ENCODE measurements at regions of chr6 and their contacts with region 1.

Region 1: GRCh38 chr6:30646458-30647241 is at the start of gene C6orf136:
- DNase-seq: peak; percentile 94
- H3K4me3 Mint-ChIP-seq: peak within 1 kb of the TSS; percentile 85
- H3K27ac Mint-ChIP-seq: peak within 1 kb of the TSS; percentile 86
- H3K4me1 Mint-ChIP-seq: peaks cover 22% of the 10 kb centered on the region
- H3K27me3 Mint-ChIP-seq: no peaks in the 10 kb centered on the region
- total RNA-seq, gene C6orf136: 33.6 TPM

Region 2: DNA sequence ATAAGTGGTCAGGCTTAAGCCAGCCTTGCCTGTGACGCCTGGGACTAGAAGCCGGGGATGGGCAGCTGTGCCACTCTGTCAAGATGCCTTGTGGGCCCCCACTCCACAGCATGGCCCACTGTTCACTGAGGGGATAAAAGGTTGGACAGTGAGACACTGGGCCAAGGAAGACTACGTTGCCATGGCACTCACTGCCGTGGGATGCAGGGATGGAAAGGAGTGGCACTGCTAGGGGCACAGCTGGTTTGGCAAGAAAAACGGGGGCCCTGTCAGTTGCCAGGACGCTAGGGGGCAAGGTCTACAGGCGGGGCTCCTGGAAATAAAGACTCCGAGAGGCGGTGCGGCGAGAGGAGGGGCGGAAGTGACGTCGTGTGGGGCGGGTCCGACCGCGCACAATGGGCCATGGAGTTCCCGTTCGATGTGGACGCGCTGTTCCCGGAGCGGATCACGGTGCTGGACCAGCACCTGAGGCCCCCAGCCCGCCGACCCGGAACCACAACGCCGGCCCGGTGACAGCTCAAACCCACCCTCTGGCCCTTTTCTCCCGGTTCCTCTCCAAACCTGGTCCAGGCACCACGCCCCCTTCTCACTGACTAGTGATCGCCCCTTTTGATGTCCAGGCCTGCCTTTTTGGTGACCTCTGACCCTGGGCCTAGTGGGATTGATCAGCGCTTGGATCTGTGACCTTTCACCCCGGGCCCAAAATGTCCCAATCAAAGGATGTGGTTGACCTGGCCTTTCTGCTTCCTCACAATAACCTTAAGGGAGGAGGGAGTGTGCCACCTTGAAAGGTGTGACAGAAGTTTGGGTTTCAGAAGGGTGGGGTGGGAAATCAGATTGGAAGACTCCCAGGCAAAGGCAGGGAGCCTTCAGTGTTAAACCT is 19.9 kb before region 1 on chr6 and contains the start of gene ATAT1:
- CTCF ChIA-PET with region 1: no interaction called
- intact Hi-C with region 1: loop called (anchors 2 kb)
- DNase-seq: peak; percentile 89
- H3K4me3 Mint-ChIP-seq: peak within 1 kb of the TSS; percentile 96
- H3K27ac Mint-ChIP-seq: peak within 1 kb of the TSS; percentile 93
- H3K4me1 Mint-ChIP-seq: peaks cover 21% of the 10 kb centered on the region
- H3K27me3 Mint-ChIP-seq: no peaks in the 10 kb centered on the region
- total RNA-seq, gene ATAT1: 6.9 to 7.5 TPM

Region 3: DNA sequence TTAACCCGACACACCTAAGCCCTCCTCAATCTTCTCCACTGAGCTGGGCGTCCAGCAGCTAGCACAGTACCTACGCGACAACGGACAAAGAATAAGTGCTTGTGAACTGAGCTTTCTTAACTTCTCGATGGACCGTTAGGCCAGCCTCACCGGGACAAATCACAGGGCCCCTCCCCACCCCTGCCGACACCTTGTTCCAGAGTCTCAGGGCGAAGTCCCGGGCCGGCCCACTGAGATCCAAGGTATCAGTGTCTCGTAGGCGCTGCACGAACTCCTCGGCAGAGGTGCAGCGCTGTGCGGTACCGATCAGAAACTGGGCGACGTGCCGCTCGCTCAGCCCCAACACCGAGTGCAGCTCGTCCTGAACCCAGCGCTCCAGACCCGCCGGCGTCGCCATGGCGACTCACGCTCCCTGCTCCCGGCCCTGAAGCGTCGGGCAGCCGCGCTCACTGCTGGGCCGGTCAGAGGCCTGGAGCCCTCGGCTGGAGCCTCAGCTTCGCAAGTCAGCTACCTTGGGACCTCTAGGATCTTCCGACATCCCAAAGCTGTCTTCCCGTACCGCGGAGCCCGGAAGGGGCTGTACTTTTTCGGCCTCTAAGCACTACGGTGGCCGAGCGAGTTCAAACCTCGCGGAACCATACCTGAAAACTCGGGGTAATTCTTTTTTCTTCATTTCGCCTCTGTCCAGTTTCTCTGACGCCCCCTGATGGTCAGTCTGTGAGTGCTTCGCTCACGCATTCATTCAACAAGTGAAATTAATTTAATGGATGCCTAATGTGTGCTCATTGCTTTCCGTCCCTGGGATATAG is 26.0 kb after region 1 on chr6 and contains the start of gene DHX16:
- CTCF ChIA-PET with region 1: interaction called, 3 read pairs
- intact Hi-C with region 1: loop called (anchors 2 kb)
- DNase-seq: peak; percentile 94
- H3K4me3 Mint-ChIP-seq: peak within 1 kb of the TSS; percentile 80
- H3K27ac Mint-ChIP-seq: peak within 1 kb of the TSS; percentile 80
- H3K4me1 Mint-ChIP-seq: peaks cover 26% of the 10 kb centered on the region
- H3K27me3 Mint-ChIP-seq: no peaks in the 10 kb centered on the region
- total RNA-seq, gene DHX16: 25.7 to 27.7 TPM

Region 4: GRCh38 chr6:30686908-30687658 is 40.4 kb after region 1 on chr6:
- CTCF ChIA-PET with region 1: interaction called, 3 read pairs
- intact Hi-C with region 1: loop called (anchors 2 kb)
- DNase-seq: peak; percentile 77
- H3K4me3 Mint-ChIP-seq: peak overlapping the region; percentile 96
- H3K27ac Mint-ChIP-seq: peak overlapping the region; percentile 100
- H3K4me1 Mint-ChIP-seq: peaks cover 36% of the 10 kb centered on the region
- H3K27me3 Mint-ChIP-seq: no peaks in the 10 kb centered on the region

Measured in activated naive CD4-positive, alpha-beta T cell treated with anti-CD3 and anti-CD28 coated beads for 36 hours (primary cell).